ENCODE measurements at regions of chr17 and their contacts with region 1.

Region 1: DNA sequence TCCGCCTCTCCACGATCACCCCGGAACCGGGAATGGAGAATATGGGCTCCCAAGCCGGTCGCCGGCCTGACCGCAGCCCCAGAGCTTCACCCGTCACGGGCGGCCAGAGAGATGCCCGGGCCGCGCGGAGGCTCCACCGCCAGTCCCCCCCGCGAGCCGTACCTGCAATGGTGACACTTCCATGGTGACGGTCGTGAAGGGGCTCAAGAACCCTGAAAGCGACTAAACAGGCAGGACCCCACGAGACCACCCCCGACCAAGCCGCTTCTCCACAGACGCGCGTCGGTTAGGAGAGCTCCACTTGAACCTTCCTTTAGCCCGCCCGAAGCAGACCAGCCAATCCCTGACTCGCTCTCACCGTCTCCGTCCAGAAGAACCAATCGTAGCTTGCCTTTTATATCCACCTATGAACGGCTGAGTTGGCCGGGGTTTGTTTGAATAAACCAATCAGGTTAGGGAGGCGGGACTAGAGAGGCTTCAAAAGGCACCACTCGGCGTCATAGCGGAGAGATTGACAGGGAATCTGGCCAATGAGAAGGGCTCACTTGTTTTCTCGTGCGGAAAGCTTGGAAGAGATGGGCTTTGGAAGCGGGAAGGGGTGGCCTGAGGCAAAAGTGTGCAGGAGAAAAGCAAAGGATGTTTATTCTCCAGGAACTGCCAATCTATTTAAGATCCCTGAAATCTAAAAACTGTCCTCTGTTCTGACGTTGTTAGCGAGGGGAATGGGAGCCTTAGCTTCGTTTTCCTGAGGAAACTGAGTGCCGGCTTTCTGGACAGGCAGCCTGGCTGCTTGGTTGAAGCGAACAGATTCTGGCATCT is at the start of gene TOP2A:
- DNase-seq: peak; percentile 99
- H3K4me3 ChIP-seq: peak within 1 kb of the TSS; percentile 56
- H3K27me3 ChIP-seq: no peaks in the 10 kb centered on the region
- CTCF ChIP-seq: no peak
- polyA plus RNA-seq, gene TOP2A: 31.8 and 69.6 TPM in 2 replicates

Region 2: DNA sequence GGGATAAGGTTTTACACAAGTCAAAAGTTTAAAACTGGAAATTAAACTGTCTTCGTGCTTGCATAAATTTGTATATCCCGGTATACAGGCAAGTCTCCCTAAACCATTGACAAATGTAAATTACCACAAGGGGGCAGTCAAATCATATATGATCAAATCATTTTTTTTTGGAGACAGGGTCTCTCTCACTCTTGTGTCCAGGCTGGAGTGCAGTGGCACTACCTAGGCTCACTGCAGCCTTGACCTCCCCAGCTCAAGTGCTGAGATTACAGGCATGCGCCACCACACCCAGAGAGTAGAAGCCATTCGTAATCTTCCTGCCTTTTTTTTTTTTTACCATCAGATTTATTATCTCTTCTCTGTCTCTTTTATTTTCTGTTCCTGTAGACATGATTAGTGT is 18.6 kb before region 1 on chr17:
- CTCF ChIA-PET with region 1: interaction called, 20 read pairs
- POLR2A ChIA-PET with region 1: no interaction called
- DNase-seq: peak; percentile 5
- H3K4me3 ChIP-seq: no peak overlapping the region
- H3K27me3 ChIP-seq: no peaks in the 10 kb centered on the region
- CTCF ChIP-seq: peak; percentile 58

Region 3: GRCh38 chr17:40433551-40434415 is 16.0 kb after region 1 on chr17:
- CTCF ChIA-PET with region 1: interaction called, 10 read pairs
- POLR2A ChIA-PET with region 1: no interaction called
- DNase-seq: no peak
- H3K4me3 ChIP-seq: no peak overlapping the region
- H3K27me3 ChIP-seq: peaks cover 3% of the 10 kb centered on the region; the same call in 1 of the 2 replicates
- CTCF ChIP-seq: peak; percentile 59

Region 4: GRCh38 chr17:40884708-40885512 is 467.1 kb after region 1 on chr17 and contains the start of gene KRT20:
- CTCF ChIA-PET with region 1: no interaction called
- POLR2A ChIA-PET with region 1: no interaction called
- DNase-seq: no peak
- H3K4me3 ChIP-seq: no peak within 1 kb of the TSS
- H3K27me3 ChIP-seq: no peaks in the 10 kb centered on the region
- CTCF ChIP-seq: peak; percentile 12; the same call in 1 of the 2 replicates
- polyA plus RNA-seq, gene KRT20: not detected in 2 replicates